Calu3 (cell line): ENCODE measurements at regions of chr9 and their contacts with region 1.

Region 1: DNA sequence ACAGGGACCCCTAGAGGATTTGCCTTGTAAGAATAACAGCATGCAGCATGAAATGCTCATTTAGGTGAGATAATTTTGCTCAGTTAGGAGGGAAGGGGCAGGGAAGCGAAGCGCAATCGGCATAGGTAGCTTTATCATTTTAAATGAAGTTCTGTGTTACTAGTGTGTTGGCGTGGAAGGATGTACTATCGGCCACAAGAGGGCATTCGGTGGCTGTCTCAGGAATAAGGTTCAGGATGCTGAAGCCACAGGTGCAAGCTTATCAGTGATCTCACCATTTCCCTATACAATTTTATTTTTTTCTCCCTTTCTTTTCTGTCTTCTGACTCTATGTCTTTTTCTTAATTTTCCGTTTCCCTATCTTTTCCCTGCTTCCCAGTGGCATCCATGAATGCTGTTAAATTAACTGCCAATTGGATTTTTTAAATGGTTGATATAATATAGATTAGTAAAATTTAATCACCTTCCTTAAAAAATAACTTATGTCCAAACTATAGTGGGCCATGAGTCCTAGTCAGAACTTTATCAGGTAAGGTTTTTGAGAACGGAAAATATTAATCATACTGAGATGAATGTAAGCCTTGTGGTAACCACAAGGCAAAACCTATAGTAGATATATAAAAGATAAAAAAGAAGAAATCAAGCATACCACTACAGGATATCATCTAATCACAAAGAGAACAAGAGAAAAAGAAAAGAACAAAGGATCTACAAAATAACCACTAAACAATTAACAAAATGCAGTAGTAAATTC is 1.2 kb upstream of the INSL6 start:
- DNase-seq: peak; percentile 49
- H3K4me3 Mint-ChIP-seq: no peak overlapping the region
- H3K27ac Mint-ChIP-seq: no peak overlapping the region
- H3K4me1 Mint-ChIP-seq: peaks cover 5% of the 10 kb centered on the region
- H3K27me3 Mint-ChIP-seq: peaks cover 13% of the 10 kb centered on the region
- CTCF ChIP-seq: peak; percentile 50

Region 2: GRCh38 chr9:4750023-4750673 is 436.4 kb before region 1 on chr9:
- CTCF ChIA-PET with region 1: no interaction called
- intact Hi-C with region 1: loop called (anchors 10 kb)
- DNase-seq: no peak
- H3K4me3 Mint-ChIP-seq: no peak overlapping the region
- H3K27ac Mint-ChIP-seq: no peak overlapping the region
- H3K4me1 Mint-ChIP-seq: no peaks in the 10 kb centered on the region
- H3K27me3 Mint-ChIP-seq: peaks cover 17% of the 10 kb centered on the region
- CTCF ChIP-seq: no peak

Region 3: DNA sequence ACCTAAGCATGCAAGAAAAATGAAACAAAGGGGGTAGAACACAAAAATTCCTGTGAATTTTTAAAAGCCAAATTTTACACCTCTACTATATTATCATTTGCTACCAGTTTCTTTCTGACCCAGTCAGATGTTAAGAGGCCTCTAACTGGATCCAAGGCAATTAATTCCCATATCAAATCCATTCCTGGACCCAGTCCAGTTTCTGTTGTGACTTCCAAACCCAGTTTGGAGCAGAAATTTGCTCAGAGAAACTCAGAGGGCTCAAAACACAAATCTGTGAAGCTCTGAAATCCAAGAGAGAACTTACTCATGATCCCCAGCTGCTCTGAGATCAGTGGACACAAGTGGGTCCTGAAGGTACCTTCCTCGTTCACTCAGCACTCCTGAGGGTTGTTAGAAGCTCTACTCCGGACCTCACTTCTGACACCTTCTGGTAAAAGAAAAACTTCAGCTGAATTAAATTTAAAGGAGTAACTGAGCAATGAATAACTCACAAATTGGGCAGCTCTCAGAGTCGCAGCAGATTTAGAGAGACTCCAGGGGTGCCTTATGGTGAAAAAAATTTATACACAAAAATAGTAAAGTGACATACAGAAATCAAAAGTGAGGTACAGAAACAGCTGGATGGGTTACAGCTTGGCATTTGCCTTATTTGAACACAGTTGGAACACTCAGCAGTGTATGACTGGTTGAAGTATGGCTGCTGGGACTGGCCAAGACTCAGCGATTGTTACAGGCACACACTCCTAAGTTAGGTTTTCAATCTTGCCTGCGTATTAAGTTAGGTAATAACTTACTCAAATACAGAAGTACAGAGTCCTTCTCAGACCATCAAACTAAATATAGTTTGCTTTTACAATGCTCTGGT is 77.0 kb after region 1 on chr9:
- CTCF ChIA-PET with region 1: interaction called, 11 read pairs
- intact Hi-C with region 1: loop called (anchors 1 kb)
- DNase-seq: peak; percentile 7
- H3K4me3 Mint-ChIP-seq: no peak overlapping the region
- H3K27ac Mint-ChIP-seq: no peak overlapping the region
- H3K4me1 Mint-ChIP-seq: peaks cover 13% of the 10 kb centered on the region
- H3K27me3 Mint-ChIP-seq: no peaks in the 10 kb centered on the region
- CTCF ChIP-seq: no peak

Region 4: GRCh38 chr9:5321058-5321457 is 134.5 kb after region 1 on chr9:
- CTCF ChIA-PET with region 1: interaction called, 17 read pairs
- intact Hi-C with region 1: loop called (anchors 2 kb)
- DNase-seq: no peak
- H3K4me3 Mint-ChIP-seq: no peak overlapping the region
- H3K27ac Mint-ChIP-seq: no peak overlapping the region
- H3K4me1 Mint-ChIP-seq: no peaks in the 10 kb centered on the region
- H3K27me3 Mint-ChIP-seq: no peaks in the 10 kb centered on the region
- CTCF ChIP-seq: no peak

Region 5: GRCh38 chr9:5425006-5425628 is 238.5 kb after region 1 on chr9:
- CTCF ChIA-PET with region 1: interaction called, 14 read pairs
- intact Hi-C with region 1: loop called (anchors 1 kb)
- DNase-seq: no peak
- H3K4me3 Mint-ChIP-seq: no peak overlapping the region
- H3K27ac Mint-ChIP-seq: no peak overlapping the region
- H3K4me1 Mint-ChIP-seq: no peaks in the 10 kb centered on the region
- H3K27me3 Mint-ChIP-seq: no peaks in the 10 kb centered on the region
- CTCF ChIP-seq: peak; percentile 38

Region 6: GRCh38 chr9:5442400-5443011 is 255.9 kb after region 1 on chr9:
- CTCF ChIA-PET with region 1: interaction called, 11 read pairs
- intact Hi-C with region 1: loop called (anchors 1 kb)
- DNase-seq: peak; percentile 41
- H3K4me3 Mint-ChIP-seq: no peak overlapping the region
- H3K27ac Mint-ChIP-seq: no peak overlapping the region
- H3K4me1 Mint-ChIP-seq: peaks cover 23% of the 10 kb centered on the region
- H3K27me3 Mint-ChIP-seq: no peaks in the 10 kb centered on the region
- CTCF ChIP-seq: peak; percentile 27

Region 7: DNA sequence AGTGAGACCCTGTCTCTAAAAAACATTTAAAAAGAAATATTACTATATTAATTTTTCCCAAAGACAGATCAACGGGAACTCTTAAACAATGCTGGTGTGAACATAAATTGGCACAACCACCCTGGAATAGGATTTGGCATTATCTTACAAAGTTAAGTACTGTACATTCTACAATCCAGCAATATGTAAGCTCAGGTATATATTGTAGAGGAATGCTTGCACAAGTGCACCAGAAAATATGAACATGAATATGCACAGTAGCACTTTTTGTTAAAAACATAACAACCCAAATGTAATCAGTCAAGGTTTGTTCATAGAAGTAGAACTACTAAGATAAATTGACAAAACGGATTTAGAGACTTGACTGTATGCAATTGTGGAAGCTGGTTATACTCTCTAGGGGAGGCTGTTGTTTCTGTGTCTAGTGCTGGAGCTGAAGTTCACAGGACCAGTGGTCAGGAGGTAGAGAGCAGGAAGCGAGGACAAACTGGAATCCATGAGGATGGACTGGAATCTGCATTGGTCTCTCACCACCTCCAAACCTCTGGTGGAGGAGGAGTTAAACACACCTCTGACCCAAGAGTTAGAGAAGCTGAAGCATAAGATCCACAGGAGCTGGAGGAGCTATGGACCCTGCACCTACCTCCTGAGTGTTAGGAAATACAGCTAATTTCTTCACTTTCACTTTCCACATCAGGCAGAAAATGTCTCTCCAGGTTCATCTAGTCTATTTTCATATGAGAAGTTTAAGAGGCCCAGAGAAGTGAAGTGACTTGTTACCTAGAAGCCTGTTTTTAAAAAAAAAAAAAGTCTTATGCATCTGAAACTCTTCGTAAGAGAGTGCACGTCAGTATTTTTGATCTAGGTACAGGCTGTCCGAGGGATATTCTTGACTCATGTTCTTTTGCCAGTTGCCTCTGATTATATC is 422.0 kb after region 1 on chr9:
- CTCF ChIA-PET with region 1: no interaction called
- intact Hi-C with region 1: loop called (anchors 5 kb)
- DNase-seq: peak; percentile 15
- H3K4me3 Mint-ChIP-seq: peak overlapping the region; percentile 74
- H3K27ac Mint-ChIP-seq: no peak overlapping the region
- H3K4me1 Mint-ChIP-seq: peaks cover 7% of the 10 kb centered on the region
- H3K27me3 Mint-ChIP-seq: no peaks in the 10 kb centered on the region
- CTCF ChIP-seq: no peak